Naive thymus-derived CD4-positive, alpha-beta T cell (primary cell): ENCODE measurements at regions of chr20 and their contacts with region 1.

Region 1: GRCh38 chr20:32902456-32903420 is 44.0 kb downstream of the EFCAB8 start:
- DNase-seq: peak; percentile 42 to 76 (median 65)
- ATAC-seq: peak; percentile 89
- H3K4me3 ChIP-seq: no peak overlapping the region
- H3K4me3 Mint-ChIP-seq: peak overlapping the region in 6 of 10 donors; percentile 23 to 68 (median 46)
- H3K27ac ChIP-seq: no peak overlapping the region
- H3K27ac Mint-ChIP-seq: peak overlapping the region in 7 of 9 donors; percentile 43 to 86 (median 75)
- H3K4me1 ChIP-seq: peaks cover 0 to 34% of the 10 kb centered on the region in 2 donors
- H3K4me1 Mint-ChIP-seq: peaks cover 12 to 56% (median 37%) of the 10 kb centered on the region in 7 donors
- H3K27me3 ChIP-seq: no peaks in the 10 kb centered on the region
- H3K27me3 Mint-ChIP-seq: no peaks in the 10 kb centered on the region

Region 2: DNA sequence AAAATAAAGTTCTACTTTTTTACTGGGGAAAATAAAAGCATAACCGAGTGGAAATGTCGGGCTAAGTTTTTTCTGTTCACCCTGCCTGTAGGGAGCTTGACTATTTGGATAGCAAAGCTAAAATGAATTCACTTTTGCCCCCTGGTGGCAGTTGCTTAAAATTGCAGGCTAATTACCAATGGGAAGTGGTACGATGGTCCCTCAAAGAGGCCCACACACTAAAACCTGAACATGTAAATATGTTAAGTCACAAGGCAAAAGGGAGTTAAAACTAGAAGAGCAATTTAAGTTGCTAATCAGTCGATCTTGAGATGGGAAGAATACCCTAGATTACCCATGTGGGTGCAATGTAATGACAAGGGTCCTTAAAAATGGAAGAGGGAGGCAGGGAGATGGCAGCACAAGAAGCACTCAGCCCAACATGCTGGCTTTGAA is 102.4 kb after region 1 on chr20:
- CTCF ChIA-PET with region 1: interaction called, 10 read pairs
- POLR2A ChIA-PET with region 1: no interaction called
- intact Hi-C with region 1: loop called (anchors 1 kb)
- DNase-seq: peak in 6 of 9 donors; percentile 7 to 41 (median 35)
- ATAC-seq: no peak
- H3K4me3 ChIP-seq: no peak overlapping the region
- H3K4me3 Mint-ChIP-seq: peak overlapping the region in 1 of 10 donors; percentile 38
- H3K27ac ChIP-seq: no peak overlapping the region
- H3K27ac Mint-ChIP-seq: peak overlapping the region in 2 of 9 donors; percentile 42 to 63
- H3K4me1 ChIP-seq: peaks cover 0 to 20% of the 10 kb centered on the region in 2 donors
- H3K4me1 Mint-ChIP-seq: peaks cover 3 to 56% (median 34%) of the 10 kb centered on the region in 7 donors
- H3K27me3 ChIP-seq: no peaks in the 10 kb centered on the region
- H3K27me3 Mint-ChIP-seq: no peaks in the 10 kb centered on the region

Region 3: DNA sequence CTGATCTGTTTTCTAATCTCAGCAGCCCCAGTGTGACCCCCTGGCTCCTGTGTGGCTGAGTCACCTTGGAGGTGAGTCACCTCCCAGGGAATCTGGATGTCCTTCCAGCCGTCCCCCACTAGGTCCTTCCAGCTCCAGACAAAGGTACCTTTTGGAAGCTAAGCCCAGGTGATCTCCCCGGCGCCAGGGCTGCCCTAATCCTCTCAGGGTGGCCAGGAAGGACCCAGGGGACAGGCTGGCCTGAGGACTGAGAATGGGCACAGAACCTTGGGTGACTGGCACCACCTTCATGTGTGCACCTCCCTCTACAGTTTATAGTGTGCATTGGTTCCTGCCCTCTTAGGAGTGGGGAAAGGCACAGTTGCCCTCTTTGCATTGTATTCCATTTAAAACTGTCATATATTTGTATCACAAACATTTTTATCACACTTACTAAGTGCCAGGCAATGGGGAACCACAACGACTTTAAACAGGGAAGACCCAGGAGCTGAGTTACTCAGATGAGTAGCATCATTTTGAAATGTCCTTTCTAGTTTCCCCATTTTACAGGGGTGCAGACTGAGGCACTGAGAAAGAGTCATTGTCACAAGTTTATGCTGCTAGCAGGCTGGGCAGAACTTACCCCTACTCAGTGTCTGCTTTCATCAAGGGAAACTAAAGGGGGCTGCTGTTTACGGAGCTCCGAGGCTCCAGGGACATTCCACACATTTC is 174.1 kb after region 1 on chr20:
- CTCF ChIA-PET with region 1: no interaction called
- POLR2A ChIA-PET with region 1: no interaction called
- intact Hi-C with region 1: loop called in 1 of 2 experiments (anchors 1 kb)
- DNase-seq: peak in 5 of 9 donors; percentile 13 to 51 (median 33)
- ATAC-seq: no peak
- H3K4me3 ChIP-seq: no peak overlapping the region
- H3K4me3 Mint-ChIP-seq: no peak overlapping the region
- H3K27ac ChIP-seq: no peak overlapping the region
- H3K27ac Mint-ChIP-seq: no peak overlapping the region
- H3K4me1 ChIP-seq: no peaks in the 10 kb centered on the region
- H3K4me1 Mint-ChIP-seq: peaks cover 0 to 22% (median 11%) of the 10 kb centered on the region in 7 donors
- H3K27me3 ChIP-seq: no peaks in the 10 kb centered on the region
- H3K27me3 Mint-ChIP-seq: peaks cover 0 to 7% (median 0%) of the 10 kb centered on the region in 5 donors

Region 4: GRCh38 chr20:33097001-33097400 is 194.3 kb after region 1 on chr20:
- CTCF ChIA-PET with region 1: interaction called, 29 read pairs
- POLR2A ChIA-PET with region 1: no interaction called
- intact Hi-C with region 1: loop called in 1 of 2 experiments (anchors 1 kb)
- DNase-seq: no peak
- ATAC-seq: no peak
- H3K4me3 ChIP-seq: no peak overlapping the region
- H3K4me3 Mint-ChIP-seq: no peak overlapping the region
- H3K27ac ChIP-seq: no peak overlapping the region
- H3K27ac Mint-ChIP-seq: no peak overlapping the region
- H3K4me1 ChIP-seq: peaks cover 0 to 8% of the 10 kb centered on the region in 2 donors
- H3K4me1 Mint-ChIP-seq: peaks cover 0 to 12% (median 5%) of the 10 kb centered on the region in 7 donors
- H3K27me3 ChIP-seq: no peaks in the 10 kb centered on the region
- H3K27me3 Mint-ChIP-seq: peaks cover 0 to 4% (median 0%) of the 10 kb centered on the region in 5 donors

Region 5: DNA sequence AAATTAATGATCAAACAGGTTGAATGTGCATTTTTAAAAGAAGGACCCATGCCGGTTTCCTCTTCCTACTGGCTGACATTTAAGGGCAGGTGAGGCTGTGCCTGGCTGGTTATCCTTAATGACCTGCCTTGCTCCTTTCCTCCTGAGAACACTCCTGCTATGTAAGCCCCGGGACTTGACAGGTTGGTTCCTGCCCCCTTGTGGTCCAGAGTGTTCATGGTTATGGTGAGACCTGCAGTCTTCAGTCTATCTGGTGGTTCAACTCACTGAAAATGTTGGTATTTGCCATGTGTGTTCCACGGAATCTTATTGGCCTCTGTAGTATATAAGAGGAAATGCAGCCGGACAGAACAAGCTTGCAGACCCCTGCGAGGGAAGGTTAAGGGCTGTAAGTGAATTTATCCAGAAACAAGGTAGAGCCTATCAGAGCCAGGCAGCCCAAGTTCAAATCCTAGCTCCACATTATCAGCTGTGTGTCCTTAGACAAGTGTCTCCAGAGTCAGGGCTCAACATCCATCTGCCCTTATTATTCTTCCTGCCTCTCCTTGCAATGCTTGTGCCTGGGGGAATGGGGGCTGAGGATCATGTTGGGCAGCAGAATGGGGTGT is 309.2 kb after region 1 on chr20:
- CTCF ChIA-PET with region 1: interaction called, 3 read pairs
- POLR2A ChIA-PET with region 1: no interaction called
- intact Hi-C with region 1: loop called (anchors 1 to 10 kb)
- DNase-seq: peak in 5 of 9 donors; percentile 10 to 27 (median 13)
- ATAC-seq: no peak
- H3K4me3 ChIP-seq: no peak overlapping the region
- H3K4me3 Mint-ChIP-seq: no peak overlapping the region
- H3K27ac ChIP-seq: no peak overlapping the region
- H3K27ac Mint-ChIP-seq: no peak overlapping the region
- H3K4me1 ChIP-seq: no peaks in the 10 kb centered on the region
- H3K4me1 Mint-ChIP-seq: peaks cover 0 to 7% (median 2%) of the 10 kb centered on the region in 7 donors
- H3K27me3 ChIP-seq: no peaks in the 10 kb centered on the region
- H3K27me3 Mint-ChIP-seq: peaks cover 30 to 66% (median 60%) of the 10 kb centered on the region in 5 donors

Region 6: DNA sequence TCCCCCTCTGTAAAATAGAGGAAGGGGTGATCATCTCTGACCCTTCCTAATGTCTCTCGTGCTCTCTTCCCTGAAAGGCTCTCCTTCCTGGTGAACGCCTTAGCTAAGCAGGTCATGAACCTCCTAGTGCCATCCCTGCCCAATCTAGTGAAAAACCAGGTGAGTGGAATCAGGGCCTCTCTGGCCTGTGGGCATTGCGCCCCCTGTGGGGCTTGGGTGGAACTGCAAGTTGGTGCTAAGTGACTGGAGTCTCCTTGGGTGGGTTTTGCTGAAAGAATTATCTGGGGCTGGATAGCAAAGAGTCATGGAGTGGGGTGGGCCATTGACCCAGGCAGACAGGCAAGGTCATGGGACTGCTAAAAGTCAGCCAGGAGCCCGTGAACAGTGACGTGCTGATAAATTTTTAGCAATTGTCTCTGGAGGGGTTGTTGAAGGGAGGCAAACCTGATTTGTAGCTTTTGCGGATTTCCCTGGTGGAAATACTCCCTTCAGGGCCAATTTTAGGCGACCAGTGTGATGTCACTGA is 389.2 kb after region 1 on chr20:
- CTCF ChIA-PET with region 1: interaction called, 9 read pairs
- POLR2A ChIA-PET with region 1: no interaction called
- intact Hi-C with region 1: loop called (anchors 1 to 2 kb)
- DNase-seq: peak; percentile 36 to 76 (median 57)
- ATAC-seq: peak; percentile 76
- H3K4me3 ChIP-seq: no peak overlapping the region
- H3K4me3 Mint-ChIP-seq: no peak overlapping the region
- H3K27ac ChIP-seq: no peak overlapping the region
- H3K27ac Mint-ChIP-seq: peak overlapping the region in 2 of 9 donors; percentile 1 to 10
- H3K4me1 ChIP-seq: no peaks in the 10 kb centered on the region
- H3K4me1 Mint-ChIP-seq: peaks cover 0 to 3% (median 0%) of the 10 kb centered on the region in 7 donors
- H3K27me3 ChIP-seq: no peaks in the 10 kb centered on the region
- H3K27me3 Mint-ChIP-seq: peaks cover 3 to 11% (median 5%) of the 10 kb centered on the region in 5 donors

Region 7: DNA sequence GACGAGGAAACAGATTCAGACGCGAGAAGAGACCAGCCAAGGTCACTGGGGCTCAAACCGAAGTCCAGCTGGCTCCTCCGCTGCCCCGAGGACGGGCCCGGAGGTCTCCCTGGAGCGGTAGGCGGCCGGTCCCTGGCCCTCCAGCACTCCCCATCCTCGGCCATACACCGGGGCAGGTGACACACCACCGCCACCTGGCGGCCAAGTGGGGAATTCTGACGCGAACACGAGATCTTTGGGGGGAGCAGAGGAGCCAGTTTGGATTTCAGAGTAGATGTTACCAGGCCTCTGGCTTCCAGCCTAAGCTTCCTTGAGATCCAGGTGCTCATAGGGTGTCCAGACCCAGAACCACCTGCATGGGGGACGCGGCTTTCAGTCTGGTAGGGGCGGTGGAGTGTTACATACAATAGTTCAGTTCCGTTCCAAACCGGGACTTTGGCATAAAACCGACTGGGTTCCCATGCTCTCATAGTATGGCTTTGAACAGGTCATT is 396.4 kb after region 1 on chr20:
- CTCF ChIA-PET with region 1: interaction called, 9 read pairs
- POLR2A ChIA-PET with region 1: no interaction called
- intact Hi-C with region 1: loop called (anchors 1 to 2 kb)
- DNase-seq: peak; percentile 48 to 81 (median 70)
- ATAC-seq: peak; percentile 87
- H3K4me3 ChIP-seq: no peak overlapping the region
- H3K4me3 Mint-ChIP-seq: peak overlapping the region in 1 of 10 donors; percentile 8
- H3K27ac ChIP-seq: no peak overlapping the region
- H3K27ac Mint-ChIP-seq: no peak overlapping the region
- H3K4me1 ChIP-seq: peaks cover 0 to 6% of the 10 kb centered on the region in 2 donors
- H3K4me1 Mint-ChIP-seq: peaks cover 0 to 3% (median 0%) of the 10 kb centered on the region in 7 donors
- H3K27me3 ChIP-seq: no peaks in the 10 kb centered on the region
- H3K27me3 Mint-ChIP-seq: peaks cover 4 to 19% (median 12%) of the 10 kb centered on the region in 5 donors